A673 (cell line): ENCODE measurements at regions of chr11 and their contacts with region 1.

Region 1: DNA sequence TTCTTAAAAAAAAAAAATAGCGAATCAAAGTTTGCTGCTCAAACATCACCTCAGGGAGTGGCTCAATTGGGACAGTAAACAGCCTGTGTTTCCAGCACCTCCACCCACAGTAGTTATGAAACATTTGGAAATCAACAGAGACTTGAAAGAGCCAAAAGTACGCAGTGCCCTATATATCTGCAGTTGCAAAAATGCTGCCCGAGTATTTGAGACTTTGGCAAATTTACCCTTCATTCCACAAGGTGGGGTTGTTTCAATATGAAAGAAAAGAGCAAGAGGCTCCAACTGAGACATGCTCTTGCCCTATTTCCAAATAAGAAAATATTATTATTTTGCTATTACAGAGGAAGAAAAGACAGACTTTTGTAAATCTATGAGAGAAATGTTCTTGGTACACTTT is 851.1 kb upstream of the RAG2 start:
- DNase-seq: peak; percentile 94
- H3K4me3 ChIP-seq: no peak overlapping the region
- H3K27ac ChIP-seq: no peak overlapping the region
- H3K4me1 ChIP-seq: peaks cover 50% of the 10 kb centered on the region
- H3K27me3 ChIP-seq: no peaks in the 10 kb centered on the region
- CTCF ChIP-seq: peak; percentile 92

Region 2: DNA sequence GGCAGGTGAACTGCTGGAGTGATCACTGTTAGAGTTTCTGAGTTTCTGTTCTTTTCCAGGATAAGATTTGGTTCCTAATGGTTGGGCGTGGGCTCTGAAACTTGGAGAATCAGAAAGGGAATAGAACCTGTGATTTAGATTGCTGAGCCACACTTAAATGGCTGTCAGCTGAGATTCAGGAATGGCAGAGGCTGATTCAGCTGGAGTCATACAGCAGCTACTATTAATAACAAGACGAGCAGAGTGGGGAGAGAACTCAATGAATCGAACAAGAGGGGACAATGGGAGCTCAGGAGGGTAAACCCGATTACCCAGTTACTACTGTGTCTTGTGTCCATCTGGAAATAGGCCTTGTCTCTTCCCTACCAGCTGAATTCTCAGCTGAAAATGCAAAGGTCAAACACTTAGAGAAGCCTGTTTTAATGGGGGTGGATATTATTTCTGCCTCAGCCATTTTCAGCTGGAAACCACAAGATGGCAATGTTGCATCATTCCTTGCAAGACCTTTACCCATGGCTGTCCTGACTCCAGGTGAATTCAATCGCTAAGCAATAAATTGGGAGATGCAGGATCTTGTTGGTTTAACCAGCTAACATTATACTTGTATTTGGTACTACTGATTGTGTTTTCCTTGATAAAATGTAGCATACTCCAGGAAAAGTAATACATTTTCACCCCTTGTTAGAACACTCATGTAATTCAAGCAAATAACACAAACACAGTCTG is 746.7 kb before region 1 on chr11:
- CTCF ChIA-PET with region 1: interaction called, 6 read pairs
- POLR2A ChIA-PET with region 1: no interaction called
- intact Hi-C with region 1: loop called (anchors 5 kb)
- DNase-seq: peak; percentile 92
- H3K4me3 ChIP-seq: no peak overlapping the region
- H3K27ac ChIP-seq: no peak overlapping the region
- H3K4me1 ChIP-seq: peaks cover 15% of the 10 kb centered on the region
- H3K27me3 ChIP-seq: no peaks in the 10 kb centered on the region
- CTCF ChIP-seq: peak; percentile 99

Region 3: GRCh38 chr11:36945384-36945783 is 503.8 kb before region 1 on chr11:
- CTCF ChIA-PET with region 1: no interaction called
- POLR2A ChIA-PET with region 1: no interaction called
- intact Hi-C with region 1: loop called (anchors 5 kb)
- DNase-seq: peak; percentile 89
- H3K4me3 ChIP-seq: no peak overlapping the region
- H3K27ac ChIP-seq: no peak overlapping the region
- H3K4me1 ChIP-seq: peaks cover 48% of the 10 kb centered on the region
- H3K27me3 ChIP-seq: no peaks in the 10 kb centered on the region
- CTCF ChIP-seq: peak; percentile 97

Region 4: GRCh38 chr11:37248145-37248544 is 201.0 kb before region 1 on chr11:
- CTCF ChIA-PET with region 1: no interaction called
- POLR2A ChIA-PET with region 1: no interaction called
- intact Hi-C with region 1: no loop called
- DNase-seq: no peak
- H3K4me3 ChIP-seq: no peak overlapping the region
- H3K27ac ChIP-seq: no peak overlapping the region
- H3K4me1 ChIP-seq: no peaks in the 10 kb centered on the region
- H3K27me3 ChIP-seq: no peaks in the 10 kb centered on the region
- CTCF ChIP-seq: no peak

Region 5: GRCh38 chr11:37422511-37422910 is 26.6 kb before region 1 on chr11:
- CTCF ChIA-PET with region 1: no interaction called
- POLR2A ChIA-PET with region 1: no interaction called
- intact Hi-C with region 1: loop called (anchors 2 kb)
- DNase-seq: no peak
- H3K4me3 ChIP-seq: no peak overlapping the region
- H3K27ac ChIP-seq: no peak overlapping the region
- H3K4me1 ChIP-seq: no peaks in the 10 kb centered on the region
- H3K27me3 ChIP-seq: no peaks in the 10 kb centered on the region
- CTCF ChIP-seq: no peak